Panc1 (cell line): ENCODE measurements at regions of chr16 and their contacts with region 1.

Region 1: GRCh38 chr16:64882078-64882784 is 239.6 kb downstream of the CDH11 start:
- DNase-seq: no peak
- ATAC-seq: no peak
- H3K4me3 ChIP-seq: no peak overlapping the region
- H3K27ac ChIP-seq: no peak overlapping the region
- H3K4me1 ChIP-seq: no peaks in the 10 kb centered on the region
- H3K27me3 ChIP-seq: no peaks in the 10 kb centered on the region
- CTCF ChIP-seq: no peak

Region 2: GRCh38 chr16:64830653-64831052 is 51.6 kb before region 1 on chr16:
- CTCF ChIA-PET with region 1: no interaction called
- POLR2A ChIA-PET with region 1: no interaction called
- in situ Hi-C with region 1: no loop called
- intact Hi-C with region 1: loop called (anchors 5 kb)
- DNase-seq: no peak
- ATAC-seq: no peak
- H3K4me3 ChIP-seq: no peak overlapping the region
- H3K27ac ChIP-seq: no peak overlapping the region
- H3K4me1 ChIP-seq: no peaks in the 10 kb centered on the region
- H3K27me3 ChIP-seq: no peaks in the 10 kb centered on the region
- CTCF ChIP-seq: no peak

Region 3: GRCh38 chr16:65196080-65197075 is 314.1 kb after region 1 on chr16:
- CTCF ChIA-PET with region 1: no interaction called
- POLR2A ChIA-PET with region 1: no interaction called
- in situ Hi-C with region 1: no loop called
- intact Hi-C with region 1: no loop called
- DNase-seq: no peak
- ATAC-seq: no peak
- H3K4me3 ChIP-seq: no peak overlapping the region
- H3K27ac ChIP-seq: no peak overlapping the region
- H3K4me1 ChIP-seq: no peaks in the 10 kb centered on the region
- H3K27me3 ChIP-seq: no peaks in the 10 kb centered on the region
- CTCF ChIP-seq: no peak

Region 4: GRCh38 chr16:65254144-65254543 is 371.9 kb after region 1 on chr16:
- CTCF ChIA-PET with region 1: no interaction called
- POLR2A ChIA-PET with region 1: no interaction called
- in situ Hi-C with region 1: no loop called
- intact Hi-C with region 1: no loop called
- DNase-seq: no peak
- ATAC-seq: no peak
- H3K4me3 ChIP-seq: no peak overlapping the region
- H3K27ac ChIP-seq: no peak overlapping the region
- H3K4me1 ChIP-seq: no peaks in the 10 kb centered on the region
- H3K27me3 ChIP-seq: no peaks in the 10 kb centered on the region
- CTCF ChIP-seq: no peak